Activated T-helper 2 cell treated with anti-CD3 and anti-CD28 coated beads, Interferon-gamma antibody, Interleukin-2, Interleukin-4, amounts not matched to agents 10 μg/mL and 5 μg/mL and 100 μg/mL, durations not matched to agents 14 hours and 24 hours and 36 hours (primary cell): ENCODE measurements at regions of chr6 and their contacts with region 1.

Region 1: DNA sequence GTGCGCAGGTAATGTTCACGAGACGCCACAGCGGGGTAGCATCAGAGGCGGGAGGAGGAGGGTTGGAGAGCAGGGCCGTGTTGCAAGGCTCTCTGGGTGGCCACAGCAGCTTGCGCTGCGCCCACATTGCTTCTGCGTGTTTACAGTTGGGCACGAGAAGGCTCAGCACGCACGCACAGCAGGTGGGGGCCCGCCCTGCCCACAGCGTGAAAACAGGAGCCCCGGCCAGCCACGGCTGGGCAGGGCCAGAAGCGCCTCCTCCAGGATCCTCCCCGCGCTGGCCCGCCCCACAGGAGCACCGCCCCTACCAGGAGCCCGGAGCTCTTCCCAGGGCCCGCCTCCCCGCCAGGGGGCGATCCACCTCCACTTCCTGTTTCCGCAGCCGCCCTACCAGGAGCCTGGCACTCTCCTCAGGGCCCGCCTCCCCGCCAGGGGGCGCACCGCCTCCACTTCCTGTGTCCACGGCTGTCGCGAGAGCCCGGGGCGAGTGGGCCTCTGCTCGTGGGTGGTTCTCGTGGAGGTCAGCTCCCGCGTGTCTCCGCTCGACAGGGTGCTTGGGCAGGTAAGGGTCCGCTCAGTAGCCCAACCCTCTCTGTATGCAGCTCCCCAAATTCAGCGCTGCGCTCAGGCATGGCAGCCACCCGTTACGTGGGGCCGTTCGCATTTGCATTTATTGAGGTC is at the start of gene FAM50B:
- DNase-seq: peak; percentile 89
- H3K4me3 Mint-ChIP-seq: peak within 1 kb of the TSS; percentile 69
- H3K27ac Mint-ChIP-seq: peak within 1 kb of the TSS; percentile 70
- H3K4me1 Mint-ChIP-seq: peaks cover 22% of the 10 kb centered on the region
- H3K27me3 Mint-ChIP-seq: no peaks in the 10 kb centered on the region
- total RNA-seq, gene FAM50B: 9.1 and 10.0 TPM in 2 replicates

Region 2: GRCh38 chr6:3867641-3868502 is 18.8 kb after region 1 on chr6:
- intact Hi-C with region 1: loop called (anchors 1 kb)
- DNase-seq: no peak
- H3K4me3 Mint-ChIP-seq: peak overlapping the region; percentile 15
- H3K27ac Mint-ChIP-seq: peak overlapping the region; percentile 81
- H3K4me1 Mint-ChIP-seq: peaks cover 36% of the 10 kb centered on the region
- H3K27me3 Mint-ChIP-seq: peaks cover 1% of the 10 kb centered on the region

Region 3: DNA sequence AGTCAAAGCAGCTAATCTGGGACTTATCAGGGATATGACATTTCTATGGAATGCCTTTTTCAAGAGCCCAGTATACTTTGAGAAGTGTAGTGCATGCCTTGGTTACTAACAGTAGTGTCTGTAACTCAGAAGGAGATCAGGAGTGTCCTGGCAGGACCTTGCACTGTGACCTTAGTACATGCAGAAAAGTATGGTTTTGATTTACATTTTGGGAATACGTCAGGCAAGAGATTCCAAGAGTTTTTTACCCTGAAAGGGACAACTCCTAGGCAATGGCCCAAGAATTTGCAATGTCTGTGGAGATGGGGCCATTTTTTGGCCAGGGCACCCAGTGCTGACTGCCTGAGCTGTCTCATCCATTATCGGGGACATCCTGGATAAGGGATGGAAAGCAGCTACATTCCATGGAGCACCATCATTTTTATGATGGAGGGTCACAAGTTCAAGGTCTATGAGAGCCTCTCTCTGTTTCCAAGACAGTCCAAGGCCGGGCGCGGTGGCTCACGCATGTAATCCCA is 80.3 kb after region 1 on chr6:
- intact Hi-C with region 1: loop called (anchors 1 kb)
- DNase-seq: no peak
- H3K4me3 Mint-ChIP-seq: no peak overlapping the region
- H3K27ac Mint-ChIP-seq: no peak overlapping the region
- H3K4me1 Mint-ChIP-seq: no peaks in the 10 kb centered on the region
- H3K27me3 Mint-ChIP-seq: peaks cover 5% of the 10 kb centered on the region

Region 4: DNA sequence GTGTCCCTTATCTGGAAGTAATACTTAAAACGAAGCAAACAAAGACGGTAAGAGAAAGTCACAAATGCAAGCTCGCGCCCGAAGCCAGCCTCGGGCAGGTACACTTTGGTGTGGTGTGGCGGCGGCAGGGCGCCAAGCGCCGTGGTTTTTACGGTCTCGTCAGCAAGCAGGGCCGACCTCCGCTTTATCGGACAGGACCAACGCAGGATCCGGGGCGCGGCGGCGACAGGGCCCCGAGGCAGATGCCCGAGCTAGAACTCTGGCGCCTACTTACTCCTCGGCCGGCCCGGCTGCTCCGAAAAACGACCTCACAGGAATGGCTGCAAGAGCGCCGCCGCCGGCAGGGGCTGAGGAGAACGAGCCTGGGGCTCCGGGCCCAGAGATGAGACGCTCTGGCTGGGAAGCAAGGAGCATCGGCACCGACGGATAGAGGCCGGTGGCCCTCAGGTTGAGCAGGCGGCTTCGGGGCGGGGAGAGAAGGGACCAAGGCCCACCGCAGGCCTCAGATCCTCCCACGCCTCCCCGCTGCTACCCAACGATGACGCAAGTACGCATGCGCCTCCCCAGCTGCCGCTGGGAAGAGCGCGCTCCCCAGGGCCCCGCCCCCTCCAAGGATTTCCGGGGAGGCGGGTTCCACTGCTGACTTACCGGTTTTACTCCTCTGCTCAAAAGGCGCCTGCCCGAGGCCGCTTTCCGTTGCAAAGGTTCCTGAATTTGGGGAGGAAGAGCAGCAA is 169.3 kb after region 1 on chr6:
- intact Hi-C with region 1: loop called (anchors 5 kb)
- DNase-seq: peak; percentile 95
- H3K4me3 Mint-ChIP-seq: peak overlapping the region; percentile 98
- H3K27ac Mint-ChIP-seq: peak overlapping the region; percentile 99
- H3K4me1 Mint-ChIP-seq: peaks cover 46% of the 10 kb centered on the region
- H3K27me3 Mint-ChIP-seq: no peaks in the 10 kb centered on the region